Calu3 (cell line): ENCODE measurements at regions of chr5 and their contacts with region 1.

Region 1: DNA sequence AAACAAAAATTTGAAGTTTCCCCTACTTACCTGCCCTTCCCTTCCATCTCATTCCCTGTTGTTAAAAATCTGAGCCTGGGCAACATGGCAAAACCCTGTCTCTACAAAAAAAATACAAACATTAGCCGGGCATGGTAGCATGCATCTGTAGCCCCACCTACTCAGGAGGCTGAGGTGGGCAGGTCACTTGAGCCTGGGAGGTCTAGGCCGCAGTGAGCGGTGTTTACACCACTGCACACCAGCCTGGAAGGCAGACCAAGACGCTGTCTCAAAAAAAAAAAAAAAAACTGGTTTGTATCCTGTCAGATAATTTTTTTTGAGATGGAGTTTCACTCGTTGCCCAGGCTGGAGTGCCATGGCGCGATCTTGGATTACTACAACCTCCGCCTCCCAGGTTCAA is 16.3 kb upstream of the REEP5 start:
- DNase-seq: no peak
- H3K4me3 Mint-ChIP-seq: no peak overlapping the region
- H3K27ac Mint-ChIP-seq: no peak overlapping the region
- H3K4me1 Mint-ChIP-seq: no peaks in the 10 kb centered on the region
- H3K27me3 Mint-ChIP-seq: no peaks in the 10 kb centered on the region
- CTCF ChIP-seq: no peak

Region 2: GRCh38 chr5:113123618-113124017 is 185.3 kb after region 1 on chr5:
- CTCF ChIA-PET with region 1: interaction called, 15 read pairs
- intact Hi-C with region 1: no loop called
- DNase-seq: peak; percentile 13
- H3K4me3 Mint-ChIP-seq: no peak overlapping the region
- H3K27ac Mint-ChIP-seq: no peak overlapping the region
- H3K4me1 Mint-ChIP-seq: no peaks in the 10 kb centered on the region
- H3K27me3 Mint-ChIP-seq: peaks cover 14% of the 10 kb centered on the region
- CTCF ChIP-seq: peak; percentile 22